ENCODE measurements at regions of chr10 and their contacts with region 1.

Region 1: GRCh38 chr10:60611291-60611747 is 167.0 kb upstream of the CDK1 start:
- DNase-seq: no peak
- ATAC-seq: no peak
- H3K4me3 ChIP-seq: no peak overlapping the region
- H3K27ac ChIP-seq: no peak overlapping the region
- H3K4me1 ChIP-seq: peaks cover 0 to 6% (median 0%) of the 10 kb centered on the region in 12 donors
- H3K27me3 ChIP-seq: no peaks in the 10 kb centered on the region
- CTCF ChIP-seq: no peak
- POLR2A ChIP-seq: no peak

Region 2: GRCh38 chr10:60564475-60564874 is 46.8 kb before region 1 on chr10:
- intact Hi-C with region 1: loop called in 1 of 10 experiments (anchors 10 kb)
- DNase-seq: no peak
- ATAC-seq: no peak
- H3K4me3 ChIP-seq: no peak overlapping the region
- H3K27ac ChIP-seq: no peak overlapping the region
- H3K4me1 ChIP-seq: peaks cover 0 to 2% (median 0%) of the 10 kb centered on the region in 12 donors
- H3K27me3 ChIP-seq: no peaks in the 10 kb centered on the region
- CTCF ChIP-seq: no peak
- POLR2A ChIP-seq: no peak

Region 3: GRCh38 chr10:60594476-60595051 is 16.8 kb before region 1 on chr10:
- intact Hi-C with region 1: no loop called
- DNase-seq: no peak
- ATAC-seq: no peak
- H3K4me3 ChIP-seq: no peak overlapping the region
- H3K27ac ChIP-seq: no peak overlapping the region
- H3K4me1 ChIP-seq: no peaks in the 10 kb centered on the region
- H3K27me3 ChIP-seq: no peaks in the 10 kb centered on the region
- CTCF ChIP-seq: no peak
- POLR2A ChIP-seq: no peak